Adrenal gland (tissue), 19 donors: ENCODE measurements at regions of chr5 and their contacts with region 1.

Region 1: GRCh38 chr5:74640450-74640953 is at the start of gene ENC1:
- DNase-seq: peak; percentile 71 to 87 (median 80)
- H3K4me3 ChIP-seq: peak within 1 kb of the TSS; percentile 23 to 76 (median 50)
- H3K27ac ChIP-seq: peak within 1 kb of the TSS; percentile 58 to 91 (median 67)
- H3K4me1 ChIP-seq: peaks cover 3 to 29% of the 10 kb centered on the region in 2 donors
- H3K27me3 ChIP-seq: no peaks in the 10 kb centered on the region
- CTCF ChIP-seq: peak; percentile 24 to 75 (median 52)
- POLR2A ChIP-seq: peak; percentile 27 to 72
- total RNA-seq, gene ENC1: 2.1 to 48.7 (median 5.1) TPM

Region 2: DNA sequence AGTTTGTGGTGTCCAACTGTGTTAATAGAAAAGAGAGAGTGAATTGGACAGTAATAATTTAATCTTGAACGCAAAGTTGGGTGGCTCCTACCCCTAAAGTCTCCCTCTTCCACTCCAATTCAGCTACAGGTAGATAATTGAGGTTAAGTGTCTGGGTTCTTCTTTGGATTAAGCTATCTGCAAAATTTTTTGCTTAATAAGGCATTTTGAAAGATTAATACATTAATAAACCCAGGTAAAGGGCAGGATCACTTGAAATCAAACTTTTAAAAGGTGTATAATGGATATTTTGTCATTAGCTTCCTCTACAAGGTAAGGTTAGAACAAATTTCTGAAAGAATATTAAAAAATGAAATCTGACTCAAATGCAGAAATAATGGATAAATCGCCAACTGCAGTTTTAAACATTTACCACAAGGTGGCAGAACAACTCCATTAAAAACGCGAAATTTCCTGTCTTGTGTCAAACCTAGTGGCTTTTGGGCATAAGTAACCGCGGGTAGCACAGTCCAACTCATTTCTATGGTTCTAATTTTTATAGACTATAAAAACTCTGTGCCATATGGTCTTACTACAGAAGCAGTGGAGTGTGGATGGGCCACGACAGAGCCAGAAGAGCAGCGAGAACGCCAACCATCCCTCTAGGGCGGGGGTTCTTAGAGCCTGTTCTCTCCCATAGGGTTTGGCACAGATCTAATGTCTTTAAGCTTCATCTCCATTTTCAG is 738.0 kb before region 1 on chr5:
- intact Hi-C with region 1: loop called in 1 of 2 experiments (anchors 5 kb)
- DNase-seq: no peak
- H3K4me3 ChIP-seq: no peak overlapping the region
- H3K27ac ChIP-seq: no peak overlapping the region
- H3K4me1 ChIP-seq: peaks cover 0 to 12% of the 10 kb centered on the region in 2 donors
- H3K27me3 ChIP-seq: no peaks in the 10 kb centered on the region
- CTCF ChIP-seq: peak; percentile 84 to 93 (median 90)
- POLR2A ChIP-seq: no peak

Region 3: DNA sequence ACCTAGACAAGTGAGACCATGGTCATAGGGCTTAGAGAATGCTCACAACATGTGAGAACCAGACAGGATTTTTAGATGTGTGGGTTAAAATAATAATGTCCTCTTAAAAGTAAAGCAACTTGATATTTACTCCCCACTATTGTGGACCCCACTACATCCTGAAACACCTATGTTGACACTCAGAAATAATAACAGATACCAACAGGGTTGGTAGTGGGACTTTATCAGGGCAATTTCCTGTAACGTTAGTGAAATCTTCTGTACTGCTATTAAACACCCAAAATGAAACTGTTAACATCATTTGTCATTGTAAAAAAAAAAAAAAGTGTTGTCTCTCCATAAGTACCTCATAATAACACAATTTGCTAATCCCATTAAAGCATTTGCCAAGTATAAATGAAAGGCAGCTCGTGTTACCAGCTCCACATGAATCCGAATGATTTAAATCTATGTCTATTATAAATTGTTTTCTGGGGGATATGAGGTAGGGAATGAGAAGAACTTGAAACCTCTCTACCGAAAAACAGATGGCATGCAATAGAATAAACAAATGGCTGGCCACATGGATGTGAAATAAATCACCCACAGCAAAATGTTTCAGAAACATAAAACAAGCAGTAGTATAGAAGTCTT is 728.6 kb before region 1 on chr5:
- intact Hi-C with region 1: loop called in 1 of 2 experiments (anchors 5 kb)
- DNase-seq: no peak
- H3K4me3 ChIP-seq: no peak overlapping the region
- H3K27ac ChIP-seq: no peak overlapping the region
- H3K4me1 ChIP-seq: peaks cover 1 to 12% of the 10 kb centered on the region in 2 donors
- H3K27me3 ChIP-seq: no peaks in the 10 kb centered on the region
- CTCF ChIP-seq: no peak
- POLR2A ChIP-seq: no peak

Region 4: DNA sequence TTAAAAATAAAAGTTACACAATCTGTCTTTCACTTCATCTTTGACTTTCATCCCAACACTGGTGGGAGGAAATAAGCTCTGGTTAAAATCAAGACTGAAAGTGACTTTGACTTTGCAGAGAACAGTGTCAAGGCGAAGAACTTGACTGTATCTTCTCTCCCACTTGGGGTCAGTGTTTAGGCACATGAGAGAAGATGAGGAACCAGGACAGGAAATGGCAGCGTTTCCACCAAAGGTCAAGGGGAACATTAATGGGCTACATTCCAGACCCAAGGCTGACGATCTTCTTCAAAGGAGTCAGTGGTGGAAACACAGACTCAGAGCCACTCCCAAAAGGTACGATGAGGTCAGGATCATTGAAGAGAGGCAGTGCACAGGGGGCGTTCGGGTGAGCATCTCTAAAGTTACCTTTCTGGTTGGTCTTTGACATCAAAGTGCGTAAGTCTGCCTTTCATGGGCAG is 605.0 kb before region 1 on chr5:
- intact Hi-C with region 1: loop called (anchors 5 to 10 kb)
- DNase-seq: peak; percentile 23 to 70 (median 45)
- H3K4me3 ChIP-seq: no peak overlapping the region
- H3K27ac ChIP-seq: no peak overlapping the region
- H3K4me1 ChIP-seq: peaks cover 0 to 5% of the 10 kb centered on the region in 2 donors
- H3K27me3 ChIP-seq: no peaks in the 10 kb centered on the region
- CTCF ChIP-seq: peak in 5 of 6 experiments; percentile 27 to 57 (median 44)
- POLR2A ChIP-seq: no peak

Region 5: GRCh38 chr5:74667396-74667795 is 26.9 kb after region 1 on chr5:
- intact Hi-C with region 1: no loop called
- DNase-seq: no peak
- H3K4me3 ChIP-seq: no peak overlapping the region
- H3K27ac ChIP-seq: no peak overlapping the region
- H3K4me1 ChIP-seq: no peaks in the 10 kb centered on the region
- H3K27me3 ChIP-seq: no peaks in the 10 kb centered on the region
- CTCF ChIP-seq: no peak
- POLR2A ChIP-seq: no peak

Region 6: GRCh38 chr5:75310212-75310611 is 669.7 kb after region 1 on chr5:
- intact Hi-C with region 1: no loop called
- DNase-seq: no peak
- H3K4me3 ChIP-seq: no peak overlapping the region
- H3K27ac ChIP-seq: no peak overlapping the region
- H3K4me1 ChIP-seq: peaks cover 5 to 7% of the 10 kb centered on the region in 2 donors
- H3K27me3 ChIP-seq: no peaks in the 10 kb centered on the region
- CTCF ChIP-seq: no peak
- POLR2A ChIP-seq: no peak